Mammary epithelial cell (primary cell): ENCODE measurements at regions of chr3 and their contacts with region 1.

Region 1: DNA sequence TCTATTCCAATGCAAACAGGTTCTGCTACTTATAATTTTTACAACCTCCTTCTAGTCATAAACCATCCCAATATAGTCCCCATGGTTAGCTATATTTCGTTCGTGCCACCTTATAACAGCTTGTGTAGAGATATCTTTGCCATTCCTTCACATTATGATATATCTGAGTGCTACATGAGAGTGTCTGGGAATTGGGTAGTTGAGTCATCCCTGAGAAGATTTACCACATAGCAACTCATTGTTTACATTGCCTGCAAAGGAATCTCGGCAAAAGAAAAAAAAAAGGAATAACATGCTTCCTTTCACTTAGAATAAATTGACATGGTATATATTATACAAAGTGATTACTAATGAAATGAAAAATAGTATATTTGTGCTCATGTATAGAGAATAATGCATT is 86.0 kb upstream of the VGLL3 start:
- DNase-seq: peak; percentile 71
- H3K4me3 ChIP-seq: no peak overlapping the region
- H3K27ac ChIP-seq: peak overlapping the region; percentile 2
- H3K4me1 ChIP-seq: peaks cover 5% of the 10 kb centered on the region
- H3K27me3 ChIP-seq: no peaks in the 10 kb centered on the region
- CTCF ChIP-seq: no peak

Region 2: GRCh38 chr3:86849991-86850390 is 227.0 kb before region 1 on chr3:
- CTCF ChIA-PET with region 1: no interaction called
- dilution Hi-C with region 1: no loop called
- in situ Hi-C with region 1: no loop called
- intact Hi-C with region 1: no loop called
- DNase-seq: no peak
- H3K4me3 ChIP-seq: no peak overlapping the region
- H3K27ac ChIP-seq: no peak overlapping the region
- H3K4me1 ChIP-seq: no peaks in the 10 kb centered on the region
- H3K27me3 ChIP-seq: no peaks in the 10 kb centered on the region
- CTCF ChIP-seq: no peak

Region 3: DNA sequence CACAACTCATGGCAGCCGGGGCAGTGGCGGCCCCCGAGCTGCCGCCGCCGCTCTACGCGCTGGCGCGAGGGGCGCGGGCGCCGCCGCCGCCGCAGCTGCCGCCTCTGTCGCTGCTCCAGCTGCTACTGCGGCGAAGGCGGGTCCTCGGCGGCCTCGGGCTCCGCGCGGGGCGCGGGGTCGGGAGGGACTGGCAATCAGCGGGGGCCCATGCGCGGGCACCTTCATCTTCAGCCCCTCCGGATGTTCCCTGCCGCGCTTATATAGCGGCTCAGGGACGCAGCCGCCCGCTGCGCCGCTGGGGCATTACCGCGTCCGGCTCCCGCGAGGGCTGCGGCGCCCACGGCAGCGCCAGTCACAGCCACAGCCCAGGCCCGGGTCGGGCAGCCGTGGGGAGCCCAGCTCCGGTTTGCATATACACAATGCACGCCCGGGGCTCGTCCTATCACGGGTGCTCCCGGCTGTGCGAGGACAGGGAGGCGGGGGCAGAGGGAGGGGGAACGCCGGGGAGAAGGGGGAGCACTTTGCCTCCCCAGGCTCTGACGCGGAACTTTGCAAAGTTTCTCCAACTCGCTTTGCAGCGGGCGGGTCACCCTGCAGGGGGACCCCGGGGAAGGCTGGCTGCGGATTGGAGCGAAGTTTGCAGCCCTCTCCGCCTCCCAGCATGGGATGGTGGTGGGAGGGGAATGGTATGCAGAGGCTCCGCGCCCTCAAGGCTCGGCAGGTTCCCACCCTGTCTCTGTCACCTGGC is 86.0 kb before region 1 on chr3 and contains the start of gene VGLL3:
- CTCF ChIA-PET with region 1: no interaction called
- dilution Hi-C with region 1: no loop called
- in situ Hi-C with region 1: no loop called
- intact Hi-C with region 1: loop called (anchors 5 kb)
- DNase-seq: peak; percentile 86
- H3K4me3 ChIP-seq: peak within 1 kb of the TSS; percentile 69 to 87 (median 76)
- H3K27ac ChIP-seq: peak within 1 kb of the TSS; percentile 91
- H3K4me1 ChIP-seq: peaks cover 35% of the 10 kb centered on the region
- H3K27me3 ChIP-seq: no peaks in the 10 kb centered on the region
- CTCF ChIP-seq: peak in 1 of 2 donors; percentile 25
- total RNA-seq, gene VGLL3: 27.9 to 33.2 TPM